Activated CD8-positive, alpha-beta T cell treated with anti-CD3 and anti-CD28 coated beads, Interleukin-2, amount 10 ng/mL, durations not matched to agents 7 days and 5 days (primary cell): ENCODE measurements at regions of chr20 and their contacts with region 1.

Region 1: GRCh38 chr20:20580139-20580538 is 132.3 kb downstream of the RALGAPA2 start:
- DNase-seq: no peak
- ATAC-seq: no peak
- H3K4me3 Mint-ChIP-seq: no peak overlapping the region
- H3K27ac Mint-ChIP-seq: no peak overlapping the region
- H3K4me1 Mint-ChIP-seq: peaks cover 4% of the 10 kb centered on the region
- H3K27me3 Mint-ChIP-seq: no peaks in the 10 kb centered on the region

Region 2: DNA sequence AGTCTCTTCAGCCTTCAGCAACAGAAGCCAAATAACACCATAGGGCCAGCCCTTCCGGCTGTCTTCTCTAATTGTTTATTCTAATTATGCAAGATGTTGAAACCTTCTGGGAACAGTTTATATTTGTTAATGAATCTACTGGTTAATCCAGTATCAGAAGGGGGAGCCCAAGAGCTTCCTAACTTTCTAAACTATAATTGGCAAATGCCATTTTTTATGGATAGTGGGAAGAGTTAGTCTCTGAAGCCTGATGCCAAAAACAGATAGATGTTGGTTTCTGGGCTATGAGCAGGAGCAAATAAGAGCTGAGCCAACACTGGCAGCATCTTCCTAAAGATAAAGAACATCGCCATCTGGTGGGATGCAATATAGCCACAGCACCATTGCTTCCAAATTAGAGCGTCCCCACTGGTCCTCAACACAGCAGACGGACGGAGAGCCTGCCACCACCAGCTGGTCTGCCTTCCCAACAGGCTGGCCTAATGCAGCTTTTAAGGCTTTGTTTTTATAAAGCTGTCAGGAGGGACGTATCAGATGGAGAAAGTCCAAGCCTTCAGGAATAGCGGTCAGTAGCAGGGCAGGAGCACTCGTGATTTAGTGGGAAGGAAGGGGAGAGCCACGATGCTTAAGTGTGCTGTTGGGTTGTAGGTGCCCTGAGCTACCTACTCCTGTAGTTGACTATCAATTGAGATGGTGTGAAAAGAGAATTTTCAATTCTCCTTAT is 13.5 kb after region 1 on chr20:
- CTCF ChIA-PET with region 1: interaction called, 14 read pairs
- POLR2A ChIA-PET with region 1: no interaction called
- DNase-seq: peak; percentile 26
- ATAC-seq: no peak
- H3K4me3 Mint-ChIP-seq: no peak overlapping the region
- H3K27ac Mint-ChIP-seq: no peak overlapping the region
- H3K4me1 Mint-ChIP-seq: no peaks in the 10 kb centered on the region
- H3K27me3 Mint-ChIP-seq: no peaks in the 10 kb centered on the region